CD4-positive, alpha-beta memory T cell (primary cell): ENCODE measurements at regions of chr5 and their contacts with region 1.

Region 1: GRCh38 chr5:139633295-139634027 is 14.7 kb upstream of the CXXC5 start:
- DNase-seq: peak; percentile 52 to 66 (median 64)
- H3K4me3 ChIP-seq: no peak overlapping the region
- H3K4me3 Mint-ChIP-seq: peak overlapping the region in 1 of 8 donors; percentile 4
- H3K27ac ChIP-seq: no peak overlapping the region
- H3K27ac Mint-ChIP-seq: peak overlapping the region in 6 of 7 donors; percentile 1 to 84 (median 28)
- H3K4me1 ChIP-seq: peaks cover 24% of the 10 kb centered on the region
- H3K4me1 Mint-ChIP-seq: peaks cover 22 to 42% (median 34%) of the 10 kb centered on the region in 4 donors
- H3K27me3 ChIP-seq: no peaks in the 10 kb centered on the region
- H3K27me3 Mint-ChIP-seq: no peaks in the 10 kb centered on the region

Region 2: DNA sequence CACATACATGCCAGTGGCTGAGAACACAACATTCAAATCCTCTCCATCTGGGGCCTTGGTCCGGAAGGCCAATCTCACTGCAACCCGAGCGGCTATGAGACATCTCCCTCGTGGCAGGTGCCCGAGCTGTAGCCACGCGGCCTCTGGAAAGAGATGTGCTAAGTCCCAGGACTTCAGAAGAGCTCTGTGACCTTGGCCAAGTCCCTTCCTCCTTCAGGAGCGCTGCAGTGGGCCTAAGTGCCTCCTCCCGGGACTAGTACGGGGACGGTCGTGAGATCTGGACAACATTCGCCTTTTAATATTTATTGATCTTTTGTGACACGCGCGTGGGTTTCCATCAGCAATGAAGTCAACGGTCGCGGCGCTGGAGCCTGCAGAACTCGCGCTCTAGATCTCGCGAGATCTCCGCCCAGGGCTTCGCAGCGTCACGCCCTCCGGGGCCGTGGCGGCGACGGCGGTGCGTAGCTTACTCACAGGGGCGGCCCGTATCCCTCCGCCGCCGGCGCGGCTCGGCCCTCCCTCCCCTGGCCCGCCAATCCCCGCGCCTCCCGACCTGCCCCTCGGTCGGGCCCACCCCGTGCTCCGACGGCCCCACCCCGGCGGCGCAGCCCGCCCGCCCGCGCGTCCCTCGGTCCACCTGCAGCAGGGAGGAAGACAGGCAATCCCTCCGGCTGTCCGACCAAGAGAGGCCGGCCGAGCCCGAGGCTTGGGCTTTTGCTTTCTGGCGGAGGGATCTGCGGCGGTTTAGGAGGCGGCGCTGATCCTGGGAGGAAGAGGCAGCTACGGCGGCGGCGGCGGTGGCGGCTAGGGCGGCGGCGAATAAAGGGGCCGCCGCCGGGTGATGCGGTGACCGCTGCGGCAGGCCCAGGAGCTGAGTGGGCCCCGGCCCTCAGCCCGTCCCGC is 72.5 kb before region 1 on chr5 and contains the start of gene UBE2D2:
- CTCF ChIA-PET with region 1: interaction called, 5 read pairs
- POLR2A ChIA-PET with region 1: interaction called, 10 read pairs
- intact Hi-C with region 1: loop called (anchors 1 kb)
- DNase-seq: peak; percentile 96 to 99 (median 97)
- H3K4me3 ChIP-seq: peak within 1 kb of the TSS; percentile 60 to 90
- H3K4me3 Mint-ChIP-seq: peak within 1 kb of the TSS; percentile 94 to 99 (median 98)
- H3K27ac ChIP-seq: peak within 1 kb of the TSS; percentile 93
- H3K27ac Mint-ChIP-seq: peak within 1 kb of the TSS; percentile 93 to 99 (median 96)
- H3K4me1 ChIP-seq: peaks cover 42% of the 10 kb centered on the region
- H3K4me1 Mint-ChIP-seq: peaks cover 25 to 48% (median 37%) of the 10 kb centered on the region in 4 donors
- H3K27me3 ChIP-seq: no peaks in the 10 kb centered on the region
- H3K27me3 Mint-ChIP-seq: no peaks in the 10 kb centered on the region
- total RNA-seq, gene UBE2D2: 160 to 169 TPM

Region 3: GRCh38 chr5:139648205-139649081 is 15.0 kb after region 1 on chr5 and contains the start of gene CXXC5:
- CTCF ChIA-PET with region 1: interaction called, 21 read pairs
- POLR2A ChIA-PET with region 1: interaction called, 28 read pairs
- intact Hi-C with region 1: no loop called
- DNase-seq: peak in 3 of 5 donors; percentile 35 to 46 (median 37)
- H3K4me3 ChIP-seq: peak within 1 kb of the TSS in 1 of 2 donors; percentile 19
- H3K4me3 Mint-ChIP-seq: peak within 1 kb of the TSS; percentile 42 to 72 (median 60)
- H3K27ac ChIP-seq: no peak within 1 kb of the TSS
- H3K27ac Mint-ChIP-seq: peak within 1 kb of the TSS in 2 of 7 donors; percentile 23 to 44
- H3K4me1 ChIP-seq: peaks cover 37% of the 10 kb centered on the region
- H3K4me1 Mint-ChIP-seq: peaks cover 13 to 65% (median 24%) of the 10 kb centered on the region in 4 donors
- H3K27me3 ChIP-seq: peaks cover 41% of the 10 kb centered on the region
- H3K27me3 Mint-ChIP-seq: peaks cover 33 to 46% of the 10 kb centered on the region in 2 donors
- total RNA-seq, gene CXXC5: 1.6 to 3.6 TPM

Region 4: GRCh38 chr5:139690064-139690802 is 56.8 kb after region 1 on chr5:
- CTCF ChIA-PET with region 1: interaction called, 99 read pairs
- POLR2A ChIA-PET with region 1: interaction called, 7 read pairs
- intact Hi-C with region 1: loop called (anchors 1 kb)
- DNase-seq: peak in 2 of 5 donors; percentile 12 to 28
- H3K4me3 ChIP-seq: no peak overlapping the region
- H3K4me3 Mint-ChIP-seq: no peak overlapping the region
- H3K27ac ChIP-seq: no peak overlapping the region
- H3K27ac Mint-ChIP-seq: peak overlapping the region in 1 of 7 donors; percentile 23
- H3K4me1 ChIP-seq: no peaks in the 10 kb centered on the region
- H3K4me1 Mint-ChIP-seq: no peaks in the 10 kb centered on the region
- H3K27me3 ChIP-seq: no peaks in the 10 kb centered on the region
- H3K27me3 Mint-ChIP-seq: peaks cover 0 to 2% of the 10 kb centered on the region in 2 donors

Region 5: DNA sequence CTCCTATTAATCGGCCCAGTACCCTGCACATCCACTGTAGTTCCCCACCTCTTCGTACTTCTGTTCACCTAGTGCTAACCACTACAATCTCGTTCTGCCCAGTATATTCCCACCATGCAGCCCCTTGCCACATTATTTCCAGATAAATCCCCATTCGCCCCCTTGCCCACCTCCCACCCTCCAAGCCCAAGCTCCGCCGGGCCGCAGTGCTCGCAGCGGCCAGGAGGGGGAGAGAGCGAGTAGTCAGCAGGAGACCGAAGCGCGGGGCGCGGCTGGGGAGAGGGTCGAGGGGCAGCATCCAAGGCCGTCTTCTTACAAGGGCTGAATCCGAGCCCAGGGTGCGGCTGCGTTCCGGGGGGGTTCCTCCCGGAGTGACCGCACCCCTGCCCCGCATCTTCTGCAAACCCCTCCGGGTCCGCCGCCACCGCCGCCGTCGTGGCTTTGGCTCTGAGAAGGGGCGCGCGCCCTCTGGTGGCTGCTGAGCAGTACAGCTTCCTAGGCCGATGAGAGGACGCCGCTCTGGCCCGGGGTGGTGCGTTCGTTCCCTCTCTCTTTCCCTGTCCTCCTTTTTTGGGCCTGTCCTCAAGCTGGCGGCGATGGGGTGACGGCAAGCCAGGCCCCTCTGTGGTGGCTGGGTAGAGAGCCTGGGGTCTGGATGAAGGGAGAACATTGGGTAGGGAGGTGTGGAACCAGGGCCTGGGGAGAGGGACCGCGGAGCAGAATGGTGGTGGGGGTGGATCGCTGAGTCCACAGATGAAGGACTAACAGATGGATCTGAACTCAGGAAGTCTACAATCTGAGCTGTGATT is 132.2 kb after region 1 on chr5:
- CTCF ChIA-PET with region 1: interaction called, 151 read pairs
- POLR2A ChIA-PET with region 1: interaction called, 28 read pairs
- intact Hi-C with region 1: loop called (anchors 1 kb)
- DNase-seq: peak; percentile 78 to 87 (median 84)
- H3K4me3 ChIP-seq: peak overlapping the region; percentile 23 to 56
- H3K4me3 Mint-ChIP-seq: peak overlapping the region; percentile 25 to 72 (median 54)
- H3K27ac ChIP-seq: no peak overlapping the region
- H3K27ac Mint-ChIP-seq: peak overlapping the region in 5 of 7 donors; percentile 31 to 66 (median 52)
- H3K4me1 ChIP-seq: peaks cover 9% of the 10 kb centered on the region
- H3K4me1 Mint-ChIP-seq: peaks cover 5 to 8% (median 7%) of the 10 kb centered on the region in 4 donors
- H3K27me3 ChIP-seq: peaks cover 19% of the 10 kb centered on the region
- H3K27me3 Mint-ChIP-seq: peaks cover 19 to 33% of the 10 kb centered on the region in 2 donors